ENCODE measurements at regions of chr6 and their contacts with region 1.

Region 1: DNA sequence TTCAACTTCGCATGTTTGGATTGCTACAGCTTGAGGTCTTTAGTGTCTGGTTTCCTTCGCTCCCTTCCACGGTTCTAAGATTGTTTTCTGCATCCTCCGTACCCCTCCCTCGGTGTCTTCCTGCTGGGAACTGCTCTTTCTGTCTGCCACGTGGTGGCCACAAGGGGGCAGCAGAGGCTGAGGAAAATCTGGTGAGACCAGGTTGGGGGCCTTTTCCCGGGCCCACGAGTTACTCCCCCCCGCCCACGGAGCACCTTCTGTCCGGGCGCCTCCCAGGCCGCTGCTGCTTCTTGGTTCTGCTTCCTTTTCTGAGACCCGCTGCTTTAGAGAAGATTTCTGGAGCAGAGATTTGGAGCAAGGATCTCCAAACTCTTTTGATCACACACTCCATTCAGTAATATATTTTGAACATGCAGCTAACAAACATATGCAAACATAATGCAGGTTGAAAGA is 21.1 kb upstream of the NOTCH4 start:
- DNase-seq: peak; percentile 50 to 87 (median 70)
- ATAC-seq: peak; percentile 72 to 97 (median 90)
- H3K4me3 ChIP-seq: no peak overlapping the region
- H3K27ac ChIP-seq: no peak overlapping the region
- H3K4me1 ChIP-seq: no peaks in the 10 kb centered on the region
- H3K27me3 ChIP-seq: no peaks in the 10 kb centered on the region
- CTCF ChIP-seq: peak; percentile 79 to 91 (median 88)

Region 2: DNA sequence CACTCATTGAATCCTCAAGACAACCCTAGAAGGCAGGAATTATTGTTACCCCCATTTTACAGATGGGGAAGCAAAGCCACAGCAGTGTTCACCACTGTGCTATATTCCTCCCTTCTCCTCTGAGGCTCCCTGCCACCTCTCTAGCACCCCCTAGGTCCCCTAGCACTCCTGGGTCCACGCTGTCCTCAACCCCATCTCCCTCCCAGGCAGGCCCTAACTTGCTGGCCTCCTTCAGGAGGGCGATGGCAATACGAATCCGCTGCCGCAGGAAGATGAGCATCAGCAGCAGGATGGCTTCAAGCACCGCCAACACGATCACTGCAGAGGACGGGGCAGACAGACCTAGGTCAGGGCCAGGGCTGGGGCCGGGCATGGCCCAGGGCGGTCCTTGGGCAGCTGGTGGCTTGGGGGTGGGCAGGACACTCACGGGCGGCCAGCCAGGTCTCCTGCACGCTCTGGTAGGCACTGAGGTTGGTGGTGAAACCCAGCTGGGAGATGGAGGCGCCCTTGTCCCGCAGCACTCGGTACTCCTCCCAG is 374.5 kb before region 1 on chr6:
- intact Hi-C with region 1: no loop called
- DNase-seq: no peak
- ATAC-seq: no peak
- H3K4me3 ChIP-seq: no peak overlapping the region
- H3K27ac ChIP-seq: no peak overlapping the region
- H3K4me1 ChIP-seq: peaks cover 0 to 5% (median 0%) of the 10 kb centered on the region in 3 donors
- H3K27me3 ChIP-seq: no peaks in the 10 kb centered on the region
- CTCF ChIP-seq: no peak

Region 3: DNA sequence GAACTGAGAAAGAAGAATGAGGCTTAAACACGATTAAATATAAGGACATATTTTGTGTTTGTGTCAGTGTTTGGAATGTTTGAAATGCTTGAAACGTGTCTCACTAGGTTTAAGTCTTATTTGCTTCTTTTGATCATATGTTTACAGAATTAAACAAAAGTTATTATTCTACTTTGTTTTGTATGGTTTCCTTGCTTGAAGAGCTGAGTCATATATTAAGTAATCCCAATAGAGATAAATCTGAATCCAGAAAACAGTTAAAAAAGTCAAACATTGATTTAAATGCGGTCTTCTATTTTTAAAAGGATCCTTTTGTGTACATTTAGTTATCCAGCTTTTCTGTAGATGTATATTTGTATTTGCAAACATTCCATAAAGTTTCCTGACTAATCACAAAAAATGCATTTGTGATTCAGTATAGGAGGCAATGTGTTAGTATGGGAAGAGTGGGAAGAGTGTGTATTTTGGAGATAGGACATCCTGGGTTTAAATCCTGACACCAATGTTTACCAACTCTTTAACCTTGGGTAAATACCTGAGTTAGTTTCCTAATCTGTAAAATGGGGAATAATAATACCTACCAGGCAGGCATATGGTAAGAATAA is 53.8 kb after region 1 on chr6:
- intact Hi-C with region 1: no loop called
- DNase-seq: no peak
- ATAC-seq: no peak
- H3K4me3 ChIP-seq: no peak overlapping the region
- H3K27ac ChIP-seq: no peak overlapping the region
- H3K4me1 ChIP-seq: no peaks in the 10 kb centered on the region
- H3K27me3 ChIP-seq: peaks cover 0 to 6% (median 2%) of the 10 kb centered on the region in 4 donors
- CTCF ChIP-seq: no peak

Region 4: DNA sequence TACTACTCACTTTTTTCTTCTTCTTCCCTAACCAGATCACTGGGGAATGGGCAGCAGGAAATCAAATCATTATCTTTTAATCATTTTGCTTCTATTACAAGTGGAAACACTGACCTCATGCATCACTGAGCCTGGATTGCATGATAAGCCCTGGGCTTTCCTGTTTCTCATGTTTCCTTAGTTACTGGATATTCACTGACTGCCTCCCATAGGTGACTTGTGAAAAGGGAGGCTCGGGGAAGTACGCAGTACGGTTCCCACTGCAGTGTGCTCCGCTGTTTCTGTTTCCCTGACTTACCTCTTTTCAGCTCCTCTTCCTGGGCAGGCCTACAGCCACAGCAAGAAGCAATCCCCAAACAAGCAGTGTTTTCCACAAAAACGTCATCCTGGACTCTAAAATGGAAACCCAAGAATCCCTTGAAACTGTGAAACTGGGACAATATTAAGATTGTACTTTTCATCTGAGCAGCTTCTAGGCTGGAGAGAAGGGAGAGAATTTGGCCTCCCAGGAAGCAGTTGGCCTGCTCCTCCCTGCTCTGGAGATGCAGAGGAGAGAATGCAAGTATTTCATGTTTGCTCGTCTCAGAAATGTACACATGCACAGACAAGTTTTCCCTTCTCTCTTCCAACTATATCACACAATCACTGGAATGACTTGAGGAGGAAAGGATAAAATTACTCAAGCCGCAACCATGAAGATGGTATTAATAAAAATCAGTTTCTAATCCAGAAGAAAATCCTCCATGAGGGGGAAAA is 148.9 kb after region 1 on chr6:
- intact Hi-C with region 1: loop called in 1 of 3 experiments (anchors 10 kb)
- DNase-seq: no peak
- ATAC-seq: peak in 3 of 4 donors; percentile 69 to 84 (median 76)
- H3K4me3 ChIP-seq: no peak overlapping the region
- H3K27ac ChIP-seq: no peak overlapping the region
- H3K4me1 ChIP-seq: no peaks in the 10 kb centered on the region
- H3K27me3 ChIP-seq: peaks cover 0 to 6% (median 2%) of the 10 kb centered on the region in 4 donors
- CTCF ChIP-seq: no peak